Heart left ventricle (tissue), 16 donors: ENCODE measurements at regions of chr20 and their contacts with region 1.

Region 1: DNA sequence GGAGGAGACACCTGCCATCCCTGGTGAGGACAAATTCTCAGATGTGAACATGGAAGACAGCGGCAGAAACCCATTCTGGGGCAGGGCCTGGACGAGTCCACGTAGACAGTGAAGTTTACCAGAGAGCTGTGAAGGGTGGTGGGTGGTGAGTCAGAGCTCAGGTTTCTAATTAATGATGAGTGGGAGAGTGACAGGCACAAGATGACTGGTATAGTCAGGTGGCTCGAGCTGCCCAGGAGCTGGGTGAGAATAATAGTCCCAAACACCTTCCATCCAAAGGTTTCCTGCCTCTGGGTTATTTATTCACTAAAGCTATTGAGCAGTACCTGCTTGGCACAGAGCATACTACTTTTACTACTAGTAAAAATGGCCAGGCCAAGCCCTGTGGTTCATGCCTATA is 6.0 kb downstream of the TLDC2 start:
- DNase-seq: no peak
- ATAC-seq: no peak
- H3K4me3 ChIP-seq: no peak overlapping the region
- H3K27ac ChIP-seq: no peak overlapping the region
- H3K4me1 ChIP-seq: peaks cover 0 to 14% (median 1%) of the 10 kb centered on the region in 12 donors
- H3K27me3 ChIP-seq: no peaks in the 10 kb centered on the region
- CTCF ChIP-seq: no peak
- POLR2A ChIP-seq: no peak

Region 2: DNA sequence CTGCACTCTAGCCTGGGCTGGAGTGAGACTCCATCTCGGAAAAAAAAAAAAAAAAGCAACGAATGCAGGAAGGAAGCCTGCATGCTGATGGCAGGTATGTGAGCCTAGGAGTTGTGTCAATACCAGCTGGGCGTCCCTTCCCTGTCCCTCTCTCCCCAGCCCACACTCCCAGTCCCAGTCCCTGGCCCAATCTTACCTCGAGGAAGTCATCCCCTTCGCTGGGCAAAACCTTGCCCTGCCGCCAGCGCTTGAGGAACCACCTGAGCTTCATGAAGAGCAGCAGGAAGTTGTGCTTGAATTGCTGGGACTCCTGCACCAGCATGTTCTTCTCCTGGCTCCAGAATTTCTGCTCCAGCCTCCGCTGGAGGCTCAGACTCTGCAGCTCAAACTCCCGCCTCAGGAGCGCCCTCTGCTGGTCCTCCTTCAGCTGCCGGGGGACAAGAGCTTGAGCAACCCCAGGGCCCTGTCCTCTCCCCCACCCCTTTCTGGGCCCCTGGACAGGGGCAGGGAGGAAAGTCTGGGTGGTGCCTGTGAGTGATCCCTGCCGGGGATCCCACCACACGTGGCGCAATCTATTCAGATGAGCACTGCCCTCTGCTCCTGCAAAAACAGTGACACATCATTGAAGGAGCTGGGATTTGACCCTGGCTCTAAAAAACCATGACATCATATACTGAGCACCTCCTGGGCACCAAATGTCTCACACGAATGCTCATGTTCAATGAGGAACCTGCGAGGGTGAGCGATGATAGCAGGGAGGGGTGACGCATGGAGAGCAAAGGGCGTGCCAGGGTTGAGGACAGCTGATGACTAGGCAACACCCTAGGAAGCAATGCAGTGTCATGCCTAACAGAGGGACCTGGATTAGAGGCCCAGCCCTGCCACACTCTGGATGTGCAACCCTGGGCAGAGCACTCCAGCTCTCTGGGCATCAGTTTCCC is 73.3 kb before region 1 on chr20:
- intact Hi-C with region 1: loop called in 1 of 10 experiments (anchors 5 kb)
- DNase-seq: peak; percentile 46 to 86 (median 52)
- ATAC-seq: peak in 3 of 4 donors; percentile 39 to 66 (median 57)
- H3K4me3 ChIP-seq: no peak overlapping the region
- H3K27ac ChIP-seq: no peak overlapping the region
- H3K4me1 ChIP-seq: peaks cover 0 to 14% (median 0%) of the 10 kb centered on the region in 12 donors
- H3K27me3 ChIP-seq: no peaks in the 10 kb centered on the region
- CTCF ChIP-seq: peak; percentile 50 to 83 (median 64)
- POLR2A ChIP-seq: no peak